HepG2 (cell line): ENCODE measurements at regions of chr1 and their contacts with region 1.

Region 1: DNA sequence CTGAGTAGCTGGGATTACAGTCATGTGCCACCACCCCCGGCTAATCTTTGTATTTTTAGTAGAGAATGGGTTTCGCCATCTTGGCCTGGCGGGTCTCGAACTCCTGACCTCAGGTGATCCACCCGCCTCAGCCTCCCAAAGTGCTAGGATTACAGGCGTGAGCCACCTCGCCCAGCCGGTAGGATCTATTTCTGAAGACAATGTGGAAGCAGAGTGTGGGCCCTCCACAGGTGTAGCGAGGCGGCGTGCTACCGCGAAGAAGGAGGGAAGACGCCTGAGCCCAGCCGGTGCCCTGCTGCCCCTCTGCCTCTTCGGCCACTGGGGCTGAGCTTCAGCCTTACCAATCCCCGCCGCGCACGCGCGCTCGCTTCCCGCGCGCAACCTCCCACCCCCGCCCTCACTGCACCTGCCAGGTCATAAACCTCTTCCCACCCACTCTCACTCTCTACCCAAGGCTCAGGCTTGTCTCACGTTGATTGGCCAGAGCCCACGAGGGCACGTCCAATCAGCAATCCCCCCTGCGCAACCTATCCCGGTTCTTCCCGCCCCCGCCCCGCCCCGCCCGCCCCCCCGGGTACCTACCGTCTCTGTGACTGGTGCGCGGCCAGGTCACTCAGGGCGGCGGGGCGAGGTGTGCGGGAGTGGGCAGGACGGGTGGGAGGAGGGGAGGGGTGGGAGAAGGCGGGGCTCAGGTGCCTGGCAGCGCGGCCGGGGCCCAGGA is 409 bp upstream of the HOOK1 start:
- DNase-seq: peak; percentile 97
- ATAC-seq: peak; percentile 96
- H3K4me3 ChIP-seq: peak overlapping the region; percentile 49 to 96 (median 96); a peak in 5 of 6 replicates
- H3K27ac ChIP-seq: peak overlapping the region; percentile 76
- H3K4me1 ChIP-seq: peaks cover 42% of the 10 kb centered on the region
- H3K27me3 ChIP-seq: no peaks in the 10 kb centered on the region
- CTCF ChIP-seq: peak; percentile 20; the same call in 1 of the 2 replicates
- EP300 ChIP-seq: no peak
- POLR2A ChIP-seq: peak; percentile 84 to 96
- RAD21 ChIP-seq: no peak

Region 2: DNA sequence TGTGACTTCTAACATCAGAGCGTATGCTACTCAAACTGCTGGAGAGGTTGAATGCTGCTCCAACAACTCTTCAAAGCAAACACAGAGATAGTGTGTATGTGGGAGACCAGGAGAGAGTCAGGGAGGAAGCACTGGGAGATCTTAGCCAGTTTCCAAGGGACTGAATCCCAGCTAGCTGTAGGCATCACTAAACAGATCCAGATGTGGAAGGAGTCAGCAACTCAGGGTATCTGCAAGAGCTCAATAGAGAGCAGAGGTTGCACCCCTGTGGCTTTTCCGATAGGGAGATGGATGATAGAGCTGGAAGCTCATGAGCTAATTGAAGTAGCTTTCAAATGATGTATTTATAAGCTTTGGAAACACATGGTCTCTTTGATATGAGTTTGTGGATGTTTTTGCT is 168.4 kb before region 1 on chr1:
- CTCF ChIA-PET with region 1: no interaction called
- POLR2A ChIA-PET with region 1: no interaction called
- in situ Hi-C with region 1: no loop called
- intact Hi-C with region 1: no loop called
- DNase-seq: no peak
- ATAC-seq: no peak
- H3K4me3 ChIP-seq: no peak overlapping the region
- H3K27ac ChIP-seq: no peak overlapping the region
- H3K4me1 ChIP-seq: peaks cover 62% of the 10 kb centered on the region
- H3K27me3 ChIP-seq: no peaks in the 10 kb centered on the region
- CTCF ChIP-seq: no peak
- EP300 ChIP-seq: no peak
- POLR2A ChIP-seq: no peak
- RAD21 ChIP-seq: no peak

Region 3: DNA sequence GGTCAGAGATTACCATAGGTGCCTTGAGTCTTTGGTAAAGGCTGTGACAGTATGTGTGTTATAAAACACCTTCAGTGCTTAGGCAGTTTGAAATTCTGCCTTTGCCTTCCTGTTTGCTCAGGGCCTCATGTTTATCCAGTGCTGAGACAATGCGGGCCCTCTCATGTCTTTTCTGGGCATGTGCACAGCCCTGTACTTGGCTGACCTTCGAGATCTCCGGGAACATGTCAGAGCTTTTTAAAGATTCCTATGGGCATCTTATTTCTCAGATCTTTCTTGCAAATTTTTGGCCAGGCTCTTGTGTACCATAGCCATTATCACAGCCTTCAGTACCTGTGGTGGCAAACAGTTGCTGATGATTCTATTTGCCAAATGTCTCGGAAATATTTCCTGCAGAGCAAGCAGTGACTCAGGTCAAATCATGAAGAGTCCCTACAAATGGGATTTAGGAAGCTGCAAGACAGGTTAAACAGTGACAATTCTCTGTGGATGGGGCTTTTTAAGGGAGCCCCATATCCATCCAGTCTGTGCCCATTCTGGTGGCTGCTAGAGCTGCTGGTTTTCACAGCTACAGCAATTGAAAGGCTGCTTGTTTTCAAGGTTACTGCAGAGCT is 42.5 kb after region 1 on chr1:
- CTCF ChIA-PET with region 1: no interaction called
- POLR2A ChIA-PET with region 1: interaction called, 9 read pairs
- in situ Hi-C with region 1: no loop called
- intact Hi-C with region 1: loop called (anchors 5 kb)
- DNase-seq: peak; percentile 90
- ATAC-seq: peak; percentile 99
- H3K4me3 ChIP-seq: peak overlapping the region; percentile 14 to 57 (median 40)
- H3K27ac ChIP-seq: peak overlapping the region; percentile 93
- H3K4me1 ChIP-seq: peaks cover 37% of the 10 kb centered on the region
- H3K27me3 ChIP-seq: no peaks in the 10 kb centered on the region
- CTCF ChIP-seq: no peak
- EP300 ChIP-seq: peak in 1 of 2 experiments; percentile 81; a peak in 2 of 4 replicates
- POLR2A ChIP-seq: no peak; a peak in 1 of 4 replicates
- RAD21 ChIP-seq: no peak

Region 4: DNA sequence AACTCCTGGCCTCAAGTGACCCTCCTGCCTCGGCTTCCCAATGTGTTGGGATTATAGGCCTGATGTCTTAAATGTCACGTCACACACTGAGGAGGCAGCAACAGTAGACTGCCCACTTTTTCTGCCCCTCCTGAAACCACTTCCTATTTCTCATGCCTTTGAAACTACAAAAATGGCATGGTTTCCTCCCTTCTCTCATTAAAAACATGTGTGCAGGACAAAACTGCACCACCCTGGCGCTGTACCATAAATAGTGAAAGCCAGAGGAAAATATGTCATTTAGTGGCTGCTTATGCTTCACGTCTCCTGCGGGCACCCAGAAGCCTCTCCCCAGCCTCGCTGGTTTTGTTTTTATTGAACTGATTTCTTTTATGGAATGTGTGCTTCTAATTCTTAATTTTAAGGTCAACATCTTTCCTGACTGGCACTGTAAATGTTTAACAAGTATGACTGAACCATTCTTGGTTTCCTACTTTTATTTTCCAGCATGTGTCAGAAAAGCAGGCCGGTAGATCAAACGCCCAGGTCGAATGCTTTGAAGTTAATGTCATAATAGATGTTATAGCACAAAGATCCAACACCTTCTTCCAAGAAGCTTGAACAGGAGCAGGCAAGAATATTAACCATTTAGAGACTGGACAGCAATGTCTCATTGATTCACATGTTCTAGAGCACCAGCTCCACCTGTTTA is 318.8 kb after region 1 on chr1:
- CTCF ChIA-PET with region 1: no interaction called
- POLR2A ChIA-PET with region 1: no interaction called
- in situ Hi-C with region 1: no loop called
- intact Hi-C with region 1: no loop called
- DNase-seq: no peak
- ATAC-seq: no peak
- H3K4me3 ChIP-seq: no peak overlapping the region
- H3K27ac ChIP-seq: no peak overlapping the region
- H3K4me1 ChIP-seq: no peaks in the 10 kb centered on the region
- H3K27me3 ChIP-seq: no peaks in the 10 kb centered on the region
- CTCF ChIP-seq: no peak
- EP300 ChIP-seq: no peak
- POLR2A ChIP-seq: no peak
- RAD21 ChIP-seq: no peak